ENCODE measurements at regions of chr19 and their contacts with region 1.

Region 1: DNA sequence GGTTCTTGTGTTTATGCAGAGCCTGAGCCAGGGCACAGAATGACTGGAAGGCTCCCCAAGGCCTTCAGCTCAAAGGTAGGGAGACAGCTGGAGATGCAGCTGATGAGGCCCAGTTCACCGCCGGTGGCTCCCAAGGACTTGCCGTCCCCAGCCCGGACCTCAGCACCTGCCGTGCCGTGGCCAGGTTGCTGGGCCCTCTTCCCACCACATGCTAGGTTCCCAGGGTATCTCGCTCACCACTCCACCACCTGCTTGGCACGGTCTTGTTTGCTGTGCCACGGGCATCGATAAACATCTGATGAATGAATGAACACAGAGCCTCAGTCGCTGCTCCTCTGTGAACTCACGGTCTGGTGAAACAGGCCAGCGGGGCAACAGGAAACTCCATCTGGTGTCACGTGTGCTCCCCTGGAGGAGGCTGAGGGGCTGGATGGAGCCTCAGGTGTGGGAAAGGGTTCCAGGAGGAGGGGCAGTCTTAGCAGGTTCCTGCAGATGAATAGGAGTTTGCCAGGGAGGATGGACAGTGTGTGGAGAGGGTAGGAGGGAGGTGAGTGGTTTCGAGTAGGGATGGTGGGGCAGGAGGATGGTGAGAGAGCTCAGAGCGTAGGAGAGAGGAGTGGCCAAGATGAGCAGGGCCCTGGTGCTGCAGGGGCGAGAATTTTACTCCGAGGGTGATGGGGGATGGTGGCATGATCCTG is 3.6 kb upstream of the KLK14 start:
- DNase-seq: peak in 1 of 5 donors; percentile 13
- H3K4me3 ChIP-seq: no peak overlapping the region
- H3K27ac ChIP-seq: no peak overlapping the region
- H3K4me1 ChIP-seq: no peaks in the 10 kb centered on the region
- H3K27me3 ChIP-seq: no peaks in the 10 kb centered on the region
- CTCF ChIP-seq: no peak
- EP300 ChIP-seq: no peak
- POLR2A ChIP-seq: no peak

Region 2: GRCh38 chr19:51029718-51030117 is 56.6 kb before region 1 on chr19:
- intact Hi-C with region 1: loop called in 2 of 4 experiments (anchors 5 kb)
- DNase-seq: no peak
- H3K4me3 ChIP-seq: no peak overlapping the region
- H3K27ac ChIP-seq: no peak overlapping the region
- H3K4me1 ChIP-seq: peaks cover 9% of the 10 kb centered on the region
- H3K27me3 ChIP-seq: no peaks in the 10 kb centered on the region
- CTCF ChIP-seq: no peak
- EP300 ChIP-seq: no peak
- POLR2A ChIP-seq: no peak

Region 3: GRCh38 chr19:51181913-51182419 is 95.7 kb after region 1 on chr19:
- intact Hi-C with region 1: no loop called
- DNase-seq: peak in 2 of 5 donors; percentile 23 to 50
- H3K4me3 ChIP-seq: no peak overlapping the region
- H3K27ac ChIP-seq: no peak overlapping the region
- H3K4me1 ChIP-seq: no peaks in the 10 kb centered on the region
- H3K27me3 ChIP-seq: no peaks in the 10 kb centered on the region
- CTCF ChIP-seq: no peak
- EP300 ChIP-seq: no peak
- POLR2A ChIP-seq: no peak

Measured in ovary (tissue), 10 donors.